Upper lobe of right lung (tissue), 1 donor: ENCODE measurements at regions of chr1 and their contacts with region 1.

Region 1: DNA sequence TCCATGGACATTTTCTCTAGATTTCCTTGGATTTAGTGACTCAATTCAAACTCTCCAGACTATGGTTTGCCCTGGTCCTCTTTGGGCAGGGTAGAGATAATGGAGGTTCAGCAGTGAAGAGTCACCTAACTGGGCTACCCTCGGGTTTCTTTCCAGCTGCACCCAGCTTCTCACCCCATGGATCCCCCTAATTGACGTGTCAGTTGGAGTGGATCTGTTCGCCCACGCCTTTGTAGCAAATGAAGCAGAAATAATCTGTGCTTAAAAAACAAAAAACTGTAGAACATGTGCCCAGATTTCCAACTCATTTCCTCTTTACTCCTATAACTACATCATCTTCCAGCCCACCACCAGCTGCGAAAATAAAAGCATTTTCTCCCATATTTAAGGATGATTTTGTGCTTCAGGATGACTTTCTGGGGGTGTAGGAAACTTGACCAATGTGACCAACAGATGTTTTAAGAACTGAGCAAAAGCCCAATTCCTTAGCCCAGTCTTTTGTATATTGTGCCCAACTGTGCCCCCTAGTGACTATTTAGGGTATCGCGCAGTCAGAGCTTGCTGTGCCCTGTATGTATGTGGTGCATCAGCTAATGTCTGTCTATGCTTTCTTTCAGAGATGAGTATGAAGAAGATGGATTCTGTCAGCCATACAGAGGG is 66.5 kb upstream of the UBE2U start:
- DNase-seq: peak; percentile 63
- ATAC-seq: peak; percentile 94
- H3K4me3 ChIP-seq: no peak overlapping the region
- H3K27ac ChIP-seq: no peak overlapping the region
- H3K4me1 ChIP-seq: no peaks in the 10 kb centered on the region
- H3K27me3 ChIP-seq: no peaks in the 10 kb centered on the region
- CTCF ChIP-seq: peak; percentile 87

Region 2: GRCh38 chr1:63615768-63616420 is 521.0 kb before region 1 on chr1:
- intact Hi-C with region 1: loop called (anchors 10 kb)
- DNase-seq: no peak
- ATAC-seq: peak; percentile 85
- H3K4me3 ChIP-seq: no peak overlapping the region
- H3K27ac ChIP-seq: no peak overlapping the region
- H3K4me1 ChIP-seq: peaks cover 2% of the 10 kb centered on the region
- H3K27me3 ChIP-seq: no peaks in the 10 kb centered on the region
- CTCF ChIP-seq: peak; percentile 90

Region 3: DNA sequence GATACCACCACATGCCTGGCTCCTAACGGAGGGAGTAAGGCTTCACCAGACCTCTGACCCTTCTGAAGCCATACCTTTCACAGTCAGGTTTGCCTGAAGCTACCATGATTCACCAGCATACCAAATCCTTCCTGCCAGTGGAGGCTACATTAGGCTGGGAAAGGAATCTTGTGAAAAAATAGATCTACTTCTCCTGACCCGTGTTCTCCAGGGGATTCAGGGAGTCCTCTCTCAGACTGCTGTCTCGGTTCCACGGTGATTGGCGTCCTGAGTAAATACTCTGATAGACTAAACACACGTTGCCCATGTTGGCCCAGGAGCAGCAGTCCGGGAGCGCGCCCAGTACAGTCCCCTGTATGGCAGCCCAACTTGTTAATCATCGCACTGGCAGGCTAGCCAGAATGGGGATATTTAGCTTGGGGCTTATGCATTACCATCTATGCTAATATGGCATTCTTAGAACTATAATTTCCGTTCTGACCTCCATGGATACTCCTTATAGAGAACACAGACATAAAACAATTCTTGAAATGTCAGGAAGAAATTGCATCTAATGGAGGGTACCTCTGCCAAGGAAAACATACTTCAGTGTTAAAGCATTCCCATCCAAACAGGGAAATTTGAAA is 189.9 kb before region 1 on chr1:
- intact Hi-C with region 1: no loop called
- DNase-seq: no peak
- ATAC-seq: peak; percentile 41
- H3K4me3 ChIP-seq: no peak overlapping the region
- H3K27ac ChIP-seq: no peak overlapping the region
- H3K4me1 ChIP-seq: peaks cover 6% of the 10 kb centered on the region
- H3K27me3 ChIP-seq: no peaks in the 10 kb centered on the region
- CTCF ChIP-seq: no peak